ENCODE measurements at regions of chr7 and their contacts with region 1.

Region 1: DNA sequence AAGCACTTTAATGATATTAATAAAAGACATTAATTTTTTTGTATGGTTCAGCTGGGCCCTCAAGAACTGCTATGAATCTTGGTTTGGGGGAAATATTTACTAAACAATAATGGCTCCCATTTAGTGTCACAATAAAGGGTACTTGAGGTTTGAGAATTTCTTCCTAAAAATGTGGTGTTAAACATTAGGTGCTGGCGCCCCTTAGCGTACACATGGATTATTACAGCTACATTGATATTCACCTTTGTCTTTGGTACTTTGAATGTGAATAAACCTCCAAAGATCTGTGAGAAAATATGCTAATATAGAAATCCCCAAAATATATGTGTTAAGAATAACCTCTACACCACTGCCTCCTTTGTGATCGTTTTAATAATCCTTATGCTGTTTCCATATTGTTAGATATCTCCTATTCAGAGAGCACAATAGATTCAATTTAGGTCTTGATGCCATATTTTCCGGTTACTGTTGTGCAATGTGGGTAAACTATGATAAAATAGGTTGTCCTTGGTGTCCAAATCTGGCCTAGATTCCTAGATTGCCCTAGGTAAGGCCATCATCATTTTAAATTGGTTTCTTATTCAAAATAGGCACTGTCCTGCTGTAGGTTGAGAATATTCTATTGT is 161.8 kb upstream of the CACNA2D1 start:
- DNase-seq: peak; percentile 60 to 64
- H3K4me3 ChIP-seq: no peak overlapping the region
- H3K4me1 ChIP-seq: peaks cover 8% of the 10 kb centered on the region
- H3K27me3 ChIP-seq: no peaks in the 10 kb centered on the region

Region 2: DNA sequence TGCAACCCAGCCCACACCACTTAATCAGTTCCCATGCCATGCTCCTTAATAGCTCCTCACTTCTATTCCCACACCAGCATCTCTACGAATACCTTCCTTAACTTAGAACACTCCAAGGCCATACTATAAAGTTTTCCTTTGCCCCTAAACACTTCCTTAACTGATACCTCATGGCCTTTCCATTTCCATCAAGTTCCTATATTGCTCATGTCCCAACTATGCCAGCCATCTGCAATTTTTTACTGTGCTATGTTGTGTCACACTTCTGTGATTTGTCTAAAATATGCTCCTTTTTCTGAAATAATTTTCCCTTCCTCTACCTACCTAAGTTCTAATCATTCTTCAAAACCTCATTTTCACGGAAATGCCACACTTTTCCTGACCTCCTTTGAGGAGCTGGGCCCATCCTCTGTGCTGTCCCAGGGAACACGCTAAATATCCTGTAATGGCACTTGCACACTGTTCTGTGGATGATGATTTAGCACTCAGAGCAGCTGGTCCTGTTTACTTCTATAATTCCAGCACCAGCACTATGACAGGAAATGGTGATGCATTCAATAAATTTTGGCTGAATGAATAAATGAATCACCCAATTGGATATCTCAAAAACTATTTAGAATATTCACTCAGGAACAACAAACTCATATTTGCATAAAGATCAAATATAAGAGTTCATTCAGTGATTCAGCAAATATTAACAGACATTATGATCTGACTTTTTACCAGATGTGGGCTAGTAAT is 569.0 kb before region 1 on chr7:
- in situ Hi-C with region 1: loop called (anchors 10 kb)
- DNase-seq: no peak
- H3K4me3 ChIP-seq: no peak overlapping the region
- H3K4me1 ChIP-seq: peaks cover 5% of the 10 kb centered on the region
- H3K27me3 ChIP-seq: no peaks in the 10 kb centered on the region

Region 3: DNA sequence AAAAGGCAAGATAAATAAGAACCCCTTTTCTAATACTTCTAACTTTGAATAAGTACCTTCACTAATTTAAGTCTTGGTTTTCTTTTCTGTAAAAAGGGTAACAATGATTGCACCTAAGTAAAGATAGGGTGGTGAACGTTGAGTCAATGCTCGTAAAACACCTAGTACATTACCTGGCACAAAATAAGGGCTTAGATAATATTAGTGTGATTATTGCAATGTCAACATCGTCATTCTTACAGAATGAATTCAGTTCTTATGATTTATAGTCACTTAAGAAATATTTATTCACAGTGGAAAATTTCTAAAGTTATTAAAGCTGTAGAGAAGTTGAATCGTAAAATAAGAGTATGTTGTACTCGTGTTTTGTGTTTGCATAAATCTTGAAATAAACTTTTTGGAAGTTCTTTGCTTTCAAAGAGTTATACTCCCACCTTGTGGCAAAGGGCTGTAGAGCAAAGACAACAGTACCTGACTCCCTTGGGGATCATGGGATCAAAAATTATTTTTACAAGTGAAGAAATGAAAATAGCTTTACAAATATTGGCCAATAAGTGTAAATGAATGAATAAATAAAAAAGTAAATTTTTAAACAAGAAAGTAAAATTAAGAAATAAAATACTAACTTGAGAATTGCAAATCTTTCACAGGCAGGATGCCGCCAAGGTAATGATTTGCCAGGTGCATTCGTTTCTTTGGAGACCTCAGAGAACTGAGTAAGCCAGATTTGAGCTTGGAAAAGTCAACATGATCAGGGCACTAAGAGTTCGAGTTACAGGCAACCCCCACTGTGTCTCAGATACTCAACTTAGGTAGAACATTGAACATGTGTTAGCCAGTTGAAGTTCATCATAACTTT is 124.0 kb after region 1 on chr7:
- in situ Hi-C with region 1: loop called (anchors 10 kb)
- DNase-seq: peak; percentile 53 to 59
- H3K4me3 ChIP-seq: no peak overlapping the region
- H3K4me1 ChIP-seq: no peaks in the 10 kb centered on the region
- H3K27me3 ChIP-seq: no peaks in the 10 kb centered on the region

Region 4: DNA sequence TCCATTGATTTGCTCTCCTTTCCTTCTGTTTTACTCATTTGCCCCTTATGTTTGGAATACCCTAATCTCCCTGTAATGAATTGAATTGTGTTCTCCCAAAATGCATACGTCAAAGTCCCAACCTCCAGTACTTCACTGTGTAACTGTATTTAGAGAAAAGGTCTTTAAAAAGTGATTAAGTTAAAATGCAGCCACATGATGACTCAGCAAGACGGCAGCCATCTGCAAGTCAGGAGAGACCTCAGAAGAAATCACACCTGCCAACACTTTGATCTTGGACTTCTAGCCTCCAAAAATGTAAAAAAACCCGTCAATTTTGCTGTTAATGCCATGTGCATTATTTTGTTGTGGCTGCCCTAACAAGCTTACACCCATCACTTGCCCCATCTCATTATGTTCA is 642.6 kb after region 1 on chr7:
- in situ Hi-C with region 1: no loop called
- DNase-seq: no peak
- H3K4me3 ChIP-seq: no peak overlapping the region
- H3K4me1 ChIP-seq: peaks cover under 1% of the 10 kb centered on the region
- H3K27me3 ChIP-seq: no peaks in the 10 kb centered on the region

Measured in HAP-1 (cell line).